ENCODE measurements at regions of chr5 and their contacts with region 1.

Region 1: GRCh38 chr5:151447174-151448037 is at the start of gene SLC36A1:
- DNase-seq: peak; percentile 89 to 94
- ATAC-seq: peak; percentile 85 to 92
- H3K4me3 ChIP-seq: peak within 1 kb of the TSS; percentile 77 to 90 (median 85)
- H3K27ac ChIP-seq: peak within 1 kb of the TSS; percentile 80 to 93 (median 86)
- H3K4me1 ChIP-seq: peaks cover 29 to 46% of the 10 kb centered on the region in 2 donors
- H3K27me3 ChIP-seq: no peaks in the 10 kb centered on the region
- CTCF ChIP-seq: peak; percentile 96 to 99 (median 98)
- POLR2A ChIP-seq: peak; percentile 78 to 86
- total RNA-seq, gene SLC36A1: 4.6 to 14.7 (median 8.5) TPM

Region 2: DNA sequence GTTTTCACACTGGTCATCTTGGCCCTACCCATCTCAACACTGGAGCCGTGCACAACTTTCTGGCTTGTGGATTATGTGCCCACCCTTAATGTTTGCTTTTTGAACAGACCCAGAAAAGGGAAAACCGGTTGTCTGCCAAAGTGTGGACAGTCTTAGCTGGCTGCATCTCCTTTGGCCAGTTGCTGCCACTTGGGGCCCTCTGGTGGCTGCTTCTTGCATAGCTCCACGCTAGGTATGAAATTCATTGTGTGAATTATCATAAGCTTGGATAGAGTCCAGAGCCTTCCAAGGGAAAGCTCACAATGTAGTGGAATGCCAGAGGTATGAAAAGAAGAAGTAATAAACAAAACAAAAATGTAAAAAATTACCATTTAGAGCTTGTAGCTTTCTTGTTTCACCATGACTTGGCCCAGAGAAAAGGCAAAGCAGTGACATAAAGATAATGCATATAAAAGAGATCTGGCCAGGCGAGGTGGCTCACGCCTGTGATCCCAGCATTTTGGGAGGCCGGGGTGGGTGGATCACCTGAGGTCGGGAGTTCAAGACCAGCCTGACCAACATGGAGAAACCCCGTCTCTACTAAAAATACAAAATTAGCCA is 131.3 kb before region 1 on chr5:
- in situ Hi-C with region 1: no loop called
- intact Hi-C with region 1: no loop called
- DNase-seq: peak; percentile 32 to 77
- ATAC-seq: peak; percentile 63 to 81
- H3K4me3 ChIP-seq: no peak overlapping the region
- H3K27ac ChIP-seq: peak overlapping the region in 2 of 4 donors; percentile 24 to 52
- H3K4me1 ChIP-seq: no peaks in the 10 kb centered on the region
- H3K27me3 ChIP-seq: no peaks in the 10 kb centered on the region
- CTCF ChIP-seq: peak; percentile 72 to 95 (median 78)
- POLR2A ChIP-seq: no peak

Region 3: GRCh38 chr5:151463137-151464029 is 16.0 kb after region 1 on chr5:
- in situ Hi-C with region 1: no loop called
- intact Hi-C with region 1: loop called (anchors 1 kb)
- DNase-seq: no peak
- ATAC-seq: peak in 1 of 2 donors; percentile 54
- H3K4me3 ChIP-seq: no peak overlapping the region
- H3K27ac ChIP-seq: no peak overlapping the region
- H3K4me1 ChIP-seq: no peaks in the 10 kb centered on the region
- H3K27me3 ChIP-seq: no peaks in the 10 kb centered on the region
- CTCF ChIP-seq: peak; percentile 43 to 57 (median 51)
- POLR2A ChIP-seq: no peak

Region 4: DNA sequence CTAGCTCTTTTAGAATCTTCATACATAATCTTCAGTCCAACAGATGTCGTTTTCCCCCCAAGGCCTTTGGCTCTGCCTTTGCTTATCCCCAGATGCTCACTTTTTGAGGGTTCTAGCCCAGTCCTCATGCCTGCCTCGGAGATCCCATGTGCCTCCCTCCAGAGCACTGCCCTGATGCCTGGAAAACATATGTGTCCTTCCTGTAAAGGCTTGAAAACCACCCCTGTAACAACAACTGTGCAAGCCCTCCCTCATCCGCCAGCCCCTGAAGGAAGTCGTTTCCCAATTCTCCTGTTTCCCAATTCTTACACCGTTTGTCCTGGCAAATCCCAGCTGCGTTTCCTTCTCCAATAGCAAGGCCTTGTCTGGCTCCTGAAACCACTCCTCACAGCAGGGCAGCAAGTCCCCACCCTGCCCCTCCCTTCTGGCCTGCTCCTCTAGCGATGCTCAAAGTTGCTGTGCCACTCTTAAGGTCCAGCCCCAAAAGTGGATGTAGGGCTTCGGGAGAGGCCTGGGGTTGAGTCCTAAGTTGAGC is 52.2 kb after region 1 on chr5:
- in situ Hi-C with region 1: loop called in 3 of 4 experiments (anchors 5 to 10 kb)
- intact Hi-C with region 1: loop called (anchors 1 kb)
- DNase-seq: no peak
- ATAC-seq: peak in 1 of 2 donors; percentile 25
- H3K4me3 ChIP-seq: no peak overlapping the region
- H3K27ac ChIP-seq: no peak overlapping the region
- H3K4me1 ChIP-seq: no peaks in the 10 kb centered on the region
- H3K27me3 ChIP-seq: no peaks in the 10 kb centered on the region
- CTCF ChIP-seq: no peak
- POLR2A ChIP-seq: no peak

Region 5: DNA sequence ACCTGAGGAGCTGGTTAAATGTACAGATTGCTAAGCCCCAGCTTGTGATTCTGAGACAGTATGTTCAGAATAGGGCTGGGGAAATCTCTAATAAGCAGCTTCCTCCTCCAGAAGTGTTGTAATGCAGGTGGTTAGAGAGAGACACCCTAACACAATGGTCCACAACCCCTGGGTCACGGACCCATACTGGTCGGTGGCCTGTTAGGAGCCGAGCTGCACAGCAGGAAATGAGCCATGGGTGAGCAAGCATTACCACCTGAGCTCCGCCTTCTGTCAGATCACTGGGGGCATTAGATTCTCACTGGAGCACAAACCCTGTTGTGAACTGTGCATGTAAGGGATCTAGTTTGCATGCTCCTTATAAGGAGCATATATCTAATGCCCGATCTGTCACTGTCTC is 61.8 kb after region 1 on chr5:
- in situ Hi-C with region 1: loop called in 3 of 4 experiments (anchors 5 to 10 kb)
- intact Hi-C with region 1: no loop called
- DNase-seq: no peak
- ATAC-seq: no peak
- H3K4me3 ChIP-seq: no peak overlapping the region
- H3K27ac ChIP-seq: peak overlapping the region in 2 of 4 donors; percentile 62 to 75
- H3K4me1 ChIP-seq: peaks cover 13 to 16% of the 10 kb centered on the region in 2 donors
- H3K27me3 ChIP-seq: no peaks in the 10 kb centered on the region
- CTCF ChIP-seq: no peak
- POLR2A ChIP-seq: no peak

Region 6: DNA sequence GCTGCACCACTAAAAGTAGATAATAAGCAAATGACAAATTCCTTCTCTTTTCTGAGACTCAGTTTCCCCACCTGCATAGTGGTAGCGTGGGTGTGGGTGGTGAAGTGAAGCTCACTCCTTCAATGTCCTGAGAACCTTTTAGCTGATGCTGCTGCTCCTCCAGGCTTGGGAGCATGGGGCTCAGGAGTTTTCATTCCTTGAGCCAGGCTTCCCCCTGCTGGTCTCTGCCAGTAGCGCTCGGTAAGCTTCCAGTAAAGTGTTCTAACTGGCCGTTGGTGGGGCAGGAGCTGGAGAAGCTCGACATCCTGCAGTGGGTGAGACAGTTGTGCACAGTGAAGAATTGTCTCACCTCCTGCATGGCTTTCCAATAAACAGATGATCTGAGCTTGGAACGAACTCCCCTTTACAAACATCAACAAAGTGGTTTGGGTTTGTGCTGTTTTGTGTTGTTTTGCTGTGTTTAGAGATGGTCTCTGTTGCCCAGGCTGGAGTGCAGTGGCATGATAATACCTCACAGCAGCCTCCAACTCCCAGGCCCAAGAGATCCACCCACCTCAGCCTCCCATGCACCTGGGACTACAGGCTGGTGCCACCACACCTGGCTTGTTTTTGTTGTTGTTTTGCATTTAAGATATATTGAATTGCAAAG is 204.7 kb after region 1 on chr5:
- in situ Hi-C with region 1: loop called in 2 of 4 experiments (anchors 5 kb)
- intact Hi-C with region 1: loop called (anchors 2 kb)
- DNase-seq: peak; percentile 60 to 71
- ATAC-seq: peak; percentile 93 to 99
- H3K4me3 ChIP-seq: no peak overlapping the region
- H3K27ac ChIP-seq: no peak overlapping the region
- H3K4me1 ChIP-seq: no peaks in the 10 kb centered on the region
- H3K27me3 ChIP-seq: no peaks in the 10 kb centered on the region
- CTCF ChIP-seq: peak; percentile 79 to 90 (median 83)
- POLR2A ChIP-seq: no peak

Region 7: GRCh38 chr5:151740336-151740942 is 293.0 kb after region 1 on chr5:
- in situ Hi-C with region 1: loop called in 2 of 4 experiments (anchors 10 to 25 kb)
- intact Hi-C with region 1: loop called (anchors 2 kb)
- DNase-seq: peak; percentile 6 to 43
- ATAC-seq: peak; percentile 67 to 83
- H3K4me3 ChIP-seq: peak overlapping the region in 3 of 4 donors; percentile 19 to 34 (median 23)
- H3K27ac ChIP-seq: peak overlapping the region; percentile 29 to 68 (median 47)
- H3K4me1 ChIP-seq: peaks cover 16 to 22% of the 10 kb centered on the region in 2 donors
- H3K27me3 ChIP-seq: no peaks in the 10 kb centered on the region
- CTCF ChIP-seq: peak; percentile 82 to 91 (median 88)
- POLR2A ChIP-seq: no peak

Region 8: DNA sequence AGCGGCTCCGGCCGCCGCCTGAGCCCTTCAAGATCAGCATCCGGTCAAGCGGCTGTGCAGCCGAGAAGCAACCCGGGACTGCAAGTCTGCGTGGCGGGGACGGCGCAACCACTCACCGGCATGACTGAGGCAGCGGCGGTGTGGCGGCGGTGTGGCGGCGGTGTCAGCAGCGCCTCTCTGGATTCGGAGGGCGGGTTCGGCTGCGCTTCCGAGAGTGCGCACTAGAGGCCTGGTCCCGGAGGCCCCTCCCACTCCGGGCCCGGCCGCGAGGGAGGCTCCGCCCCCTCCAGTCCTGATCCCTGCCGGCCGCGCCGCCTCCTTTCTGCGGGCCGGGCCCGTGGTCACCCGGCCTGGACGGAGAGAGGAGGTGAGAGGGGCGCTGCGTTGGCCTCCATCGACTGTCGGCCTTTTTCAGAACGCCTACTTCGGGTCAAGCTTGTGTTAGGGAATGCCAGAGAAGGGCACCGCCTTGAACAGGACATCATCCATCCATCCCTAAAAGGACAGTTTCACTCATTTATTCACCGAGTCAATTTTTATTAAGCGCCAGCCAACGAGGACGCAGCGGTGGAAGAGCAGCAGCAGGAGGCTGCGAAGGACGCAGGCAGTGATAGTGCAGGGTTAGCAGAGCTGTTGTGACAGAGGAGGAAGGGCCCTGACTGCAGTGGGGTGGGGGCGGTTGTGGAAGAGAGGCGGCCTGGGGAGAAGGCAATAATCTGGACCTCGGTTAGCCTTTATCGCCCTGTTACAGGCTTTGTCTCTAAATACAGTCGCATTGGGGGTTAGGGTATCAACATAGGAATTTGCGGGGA is 311.2 kb after region 1 on chr5 and contains the start of gene ATOX1:
- in situ Hi-C with region 1: loop called in 1 of 4 experiments (anchors 10 kb)
- intact Hi-C with region 1: no loop called
- DNase-seq: peak; percentile 83 to 90
- ATAC-seq: peak; percentile 93
- H3K4me3 ChIP-seq: peak within 1 kb of the TSS; percentile 84 to 95 (median 90)
- H3K27ac ChIP-seq: peak within 1 kb of the TSS; percentile 80 to 96 (median 92)
- H3K4me1 ChIP-seq: peaks cover 15 to 25% of the 10 kb centered on the region in 2 donors
- H3K27me3 ChIP-seq: no peaks in the 10 kb centered on the region
- CTCF ChIP-seq: peak in 4 of 5 experiments; percentile 19 to 54 (median 40)
- POLR2A ChIP-seq: peak; percentile 88 to 90
- total RNA-seq, gene ATOX1: 31.4 to 71.6 (median 55.3) TPM

Measured in gastrocnemius medialis (tissue), 4 donors.